ENCODE measurements at regions of chr22 and their contacts with region 1.

Region 1: DNA sequence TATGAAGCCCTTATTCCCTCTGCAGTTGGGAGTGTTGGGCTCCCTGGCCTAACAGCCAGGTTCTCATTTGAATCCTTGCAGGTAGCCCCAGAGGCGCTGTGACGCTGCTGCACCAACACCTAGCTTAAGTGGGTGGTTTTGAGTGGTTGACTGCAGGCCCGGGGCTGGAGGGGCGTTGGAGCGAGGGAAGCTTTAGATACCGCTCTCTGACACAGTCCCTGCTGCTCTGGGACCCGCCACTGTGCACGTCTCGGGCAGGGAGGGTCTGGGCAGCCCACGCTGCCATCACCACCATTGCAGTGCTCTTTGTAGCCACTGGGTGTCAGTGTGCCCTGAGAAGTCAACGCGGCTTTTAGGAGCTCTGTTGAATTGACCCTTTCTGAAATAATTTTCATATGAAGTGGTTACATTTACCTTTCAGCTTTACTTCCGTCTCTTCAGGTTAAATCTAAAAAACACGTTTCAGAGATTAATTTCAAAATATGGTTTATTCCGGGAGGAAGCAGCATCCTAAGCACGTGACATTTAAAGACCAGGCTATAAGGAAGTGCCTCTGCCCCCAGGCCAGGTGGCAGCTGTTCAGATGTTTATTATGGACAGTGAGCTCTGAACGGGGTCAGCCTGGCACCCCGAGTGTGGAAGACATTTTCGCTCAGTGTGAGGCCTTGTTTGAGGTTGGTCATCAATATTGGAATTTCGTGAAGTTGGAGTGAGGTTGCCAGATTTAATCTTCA is 30.9 kb upstream of the PARVB start:
- DNase-seq: peak; percentile 34 to 44
- H3K4me3 ChIP-seq: no peak overlapping the region
- H3K27ac ChIP-seq: no peak overlapping the region
- H3K4me1 ChIP-seq: no peaks in the 10 kb centered on the region
- H3K27me3 ChIP-seq: no peaks in the 10 kb centered on the region
- CTCF ChIP-seq: peak; percentile 99

Region 2: DNA sequence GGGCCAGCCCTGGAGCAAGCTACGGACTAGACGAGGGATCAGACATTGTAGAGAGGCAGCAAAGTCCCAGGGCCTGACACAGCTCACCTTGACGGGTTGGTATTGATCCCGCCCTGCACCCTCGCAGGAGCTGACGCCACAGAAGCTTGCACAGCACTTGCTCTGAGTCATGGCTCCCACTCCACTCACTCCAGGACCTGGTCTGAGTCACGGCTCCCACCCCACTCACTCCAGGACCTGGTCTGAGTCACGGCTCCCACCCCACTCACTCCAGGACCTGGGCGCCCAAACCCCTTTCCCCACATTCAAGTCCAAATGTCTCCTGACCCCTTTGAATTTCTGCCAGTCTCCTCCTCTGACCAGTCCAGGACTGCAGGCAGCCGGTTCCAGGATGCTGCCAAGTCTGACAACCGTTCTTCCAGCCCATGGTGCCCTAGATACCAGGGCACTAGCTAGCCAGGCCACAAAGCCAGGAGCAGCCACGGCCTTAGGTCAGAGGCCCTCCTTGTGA is 95.4 kb before region 1 on chr22:
- CTCF ChIA-PET with region 1: no interaction called
- POLR2A ChIA-PET with region 1: no interaction called
- intact Hi-C with region 1: no loop called
- DNase-seq: peak; percentile 64 to 79
- H3K4me3 ChIP-seq: no peak overlapping the region
- H3K27ac ChIP-seq: peak overlapping the region; percentile 44
- H3K4me1 ChIP-seq: peaks cover 52% of the 10 kb centered on the region
- H3K27me3 ChIP-seq: no peaks in the 10 kb centered on the region
- CTCF ChIP-seq: no peak

Region 3: GRCh38 chr22:44080936-44081861 is 88.0 kb after region 1 on chr22:
- CTCF ChIA-PET with region 1: interaction called, 25 read pairs
- POLR2A ChIA-PET with region 1: no interaction called
- intact Hi-C with region 1: loop called (anchors 1 kb)
- DNase-seq: peak in 1 of 2 experiments; percentile 62
- H3K4me3 ChIP-seq: no peak overlapping the region
- H3K27ac ChIP-seq: no peak overlapping the region
- H3K4me1 ChIP-seq: no peaks in the 10 kb centered on the region
- H3K27me3 ChIP-seq: no peaks in the 10 kb centered on the region
- CTCF ChIP-seq: peak; percentile 90

Region 4: DNA sequence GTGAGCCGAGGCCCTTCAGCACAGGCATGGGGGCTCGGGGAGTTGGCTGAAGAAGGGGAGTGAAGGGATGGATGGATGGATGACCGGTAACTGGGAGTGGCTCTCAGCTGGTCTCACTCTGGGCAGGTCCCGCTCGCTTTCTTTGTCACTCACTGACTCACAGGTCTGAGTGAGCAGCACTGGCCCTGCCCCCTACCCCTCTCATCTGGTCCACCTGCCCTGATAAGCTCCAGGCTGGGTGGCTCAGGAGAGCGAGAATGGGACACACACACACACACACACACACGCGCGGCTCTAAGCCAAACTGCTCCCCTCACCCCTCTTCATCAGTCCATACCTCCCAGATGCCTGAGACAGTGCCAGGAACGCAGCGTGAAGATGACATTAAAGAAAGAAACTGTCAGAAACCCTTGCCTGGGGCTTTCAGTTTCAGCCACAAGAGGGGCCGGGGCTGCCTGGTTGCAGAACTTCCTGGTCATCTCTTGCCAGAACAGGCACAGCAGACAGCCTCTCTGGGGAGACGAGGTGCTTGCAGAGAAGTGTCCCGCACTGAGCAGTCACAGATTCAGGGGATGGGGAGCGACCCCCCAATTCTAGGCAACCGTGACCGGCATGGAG is 336.1 kb after region 1 on chr22:
- CTCF ChIA-PET with region 1: no interaction called
- POLR2A ChIA-PET with region 1: no interaction called
- intact Hi-C with region 1: loop called (anchors 10 kb)
- DNase-seq: peak; percentile 56 to 63
- H3K4me3 ChIP-seq: peak overlapping the region; percentile 3; the same call in 1 of the 2 replicates
- H3K27ac ChIP-seq: no peak overlapping the region
- H3K4me1 ChIP-seq: peaks cover 24% of the 10 kb centered on the region
- H3K27me3 ChIP-seq: peaks cover 9% of the 10 kb centered on the region
- CTCF ChIP-seq: no peak

Region 5: GRCh38 chr22:44567846-44568493 is 574.8 kb after region 1 on chr22:
- CTCF ChIA-PET with region 1: no interaction called
- POLR2A ChIA-PET with region 1: no interaction called
- intact Hi-C with region 1: loop called (anchors 5 kb)
- DNase-seq: no peak
- H3K4me3 ChIP-seq: no peak overlapping the region
- H3K27ac ChIP-seq: no peak overlapping the region
- H3K4me1 ChIP-seq: no peaks in the 10 kb centered on the region
- H3K27me3 ChIP-seq: no peaks in the 10 kb centered on the region
- CTCF ChIP-seq: peak; percentile 87

Region 6: DNA sequence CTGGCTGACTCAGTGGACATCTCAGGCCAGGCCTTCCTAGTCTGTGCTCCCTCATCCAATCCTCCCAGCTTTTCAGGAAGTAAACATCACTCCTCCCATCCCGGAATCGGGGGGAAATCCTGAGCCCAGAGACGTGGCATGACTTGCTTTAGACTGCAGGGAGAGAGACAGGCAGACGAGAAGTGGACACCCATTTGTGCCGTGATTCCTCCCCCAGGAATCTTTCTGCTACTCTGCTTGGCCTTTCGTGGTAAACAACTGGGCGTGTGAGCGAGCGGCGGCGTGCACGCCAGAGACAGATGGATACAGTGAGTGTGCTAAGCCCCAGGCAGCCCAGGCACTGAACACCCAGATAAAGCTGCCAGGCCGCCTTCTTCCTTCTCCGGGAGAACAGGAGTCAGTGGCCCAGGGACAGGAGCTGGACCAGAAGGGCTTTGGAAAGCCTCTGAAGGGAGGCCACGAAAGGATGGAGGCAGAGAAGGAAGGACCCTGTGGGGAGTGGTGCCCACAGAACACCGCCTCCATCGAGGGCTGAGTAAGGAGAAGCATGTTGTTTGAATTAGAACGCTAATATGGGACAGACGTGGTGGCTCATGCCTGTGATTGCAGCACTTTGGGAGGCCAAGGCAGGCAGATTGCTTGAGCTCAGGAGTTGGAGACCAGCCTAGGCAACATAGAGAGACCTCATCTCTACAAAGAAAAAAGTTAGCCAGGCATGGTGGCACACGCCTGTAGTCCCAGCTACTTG is 655.8 kb after region 1 on chr22:
- CTCF ChIA-PET with region 1: interaction called, 11 read pairs
- POLR2A ChIA-PET with region 1: no interaction called
- intact Hi-C with region 1: no loop called
- DNase-seq: no peak
- H3K4me3 ChIP-seq: no peak overlapping the region
- H3K27ac ChIP-seq: no peak overlapping the region
- H3K4me1 ChIP-seq: no peaks in the 10 kb centered on the region
- H3K27me3 ChIP-seq: peaks cover 78% of the 10 kb centered on the region
- CTCF ChIP-seq: no peak

Measured in PC-9 (cell line).